Activated CD4-positive, alpha-beta T cell treated with anti-CD3 and anti-CD28 coated beads for 36 hours (primary cell): ENCODE measurements at regions of chr2 and their contacts with region 1.

Region 1: DNA sequence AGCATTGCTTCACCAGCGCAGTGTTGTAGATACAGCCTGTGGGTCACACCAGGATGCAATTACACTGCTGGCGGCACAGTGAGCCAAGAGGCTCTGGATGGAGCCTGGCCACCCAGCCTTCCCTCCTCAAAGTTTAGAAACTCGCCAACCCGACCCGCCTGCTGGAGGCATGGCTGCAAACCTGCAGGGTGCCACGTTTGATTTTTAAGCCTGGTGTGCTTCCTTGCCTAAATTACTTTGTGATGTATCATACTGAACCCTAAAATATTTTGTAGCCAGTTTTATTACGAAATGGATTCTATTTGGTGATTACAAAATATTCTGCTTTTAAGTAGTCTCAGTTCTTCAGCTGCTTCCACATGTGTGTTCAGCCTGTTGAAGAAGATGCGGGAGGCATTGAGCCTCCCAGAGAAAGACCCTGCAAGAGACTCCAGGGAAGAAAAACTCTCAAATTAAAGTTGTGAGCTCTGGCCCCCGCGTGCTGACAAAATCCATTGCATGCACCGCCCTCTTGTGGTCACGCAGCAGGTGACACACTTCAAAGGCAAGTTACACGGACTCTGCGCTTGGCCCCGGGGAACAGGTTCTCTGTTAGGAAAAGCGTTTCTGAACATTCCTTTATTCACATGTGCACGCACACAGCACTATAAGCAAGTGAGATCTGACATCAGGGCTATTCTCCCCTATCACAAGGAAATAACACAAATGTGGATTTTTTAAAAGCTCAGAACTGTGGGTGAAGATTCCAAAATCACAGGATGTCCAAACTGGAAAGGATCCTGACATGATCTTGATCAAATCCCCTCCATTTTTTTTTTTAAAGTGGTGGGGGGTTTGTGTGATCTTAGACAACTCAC is 63.0 kb upstream of the TWIST2 start:
- DNase-seq: peak; percentile 80
- ATAC-seq: peak; percentile 58
- H3K4me3 Mint-ChIP-seq: no peak overlapping the region
- H3K27ac Mint-ChIP-seq: no peak overlapping the region
- H3K4me1 Mint-ChIP-seq: peaks cover 2% of the 10 kb centered on the region
- H3K27me3 Mint-ChIP-seq: peaks cover 12% of the 10 kb centered on the region

Region 2: GRCh38 chr2:238362626-238363025 is 422.3 kb before region 1 on chr2:
- CTCF ChIA-PET with region 1: interaction called, 3 read pairs
- POLR2A ChIA-PET with region 1: no interaction called
- intact Hi-C with region 1: loop called in 1 of 2 experiments (anchors 5 kb)
- DNase-seq: no peak
- ATAC-seq: no peak
- H3K4me3 Mint-ChIP-seq: no peak overlapping the region
- H3K27ac Mint-ChIP-seq: no peak overlapping the region
- H3K4me1 Mint-ChIP-seq: no peaks in the 10 kb centered on the region
- H3K27me3 Mint-ChIP-seq: no peaks in the 10 kb centered on the region

Region 3: GRCh38 chr2:238513346-238513745 is 271.6 kb before region 1 on chr2:
- CTCF ChIA-PET with region 1: interaction called, 7 read pairs
- POLR2A ChIA-PET with region 1: no interaction called
- intact Hi-C with region 1: loop called (anchors 1 kb)
- DNase-seq: peak; percentile 72
- ATAC-seq: peak; percentile 42
- H3K4me3 Mint-ChIP-seq: no peak overlapping the region
- H3K27ac Mint-ChIP-seq: no peak overlapping the region
- H3K4me1 Mint-ChIP-seq: no peaks in the 10 kb centered on the region
- H3K27me3 Mint-ChIP-seq: no peaks in the 10 kb centered on the region

Region 4: GRCh38 chr2:238573065-238573778 is 211.7 kb before region 1 on chr2:
- CTCF ChIA-PET with region 1: interaction called, 5 read pairs
- POLR2A ChIA-PET with region 1: no interaction called
- intact Hi-C with region 1: loop called in 1 of 2 experiments (anchors 1 kb)
- DNase-seq: peak; percentile 57
- ATAC-seq: no peak
- H3K4me3 Mint-ChIP-seq: no peak overlapping the region
- H3K27ac Mint-ChIP-seq: no peak overlapping the region
- H3K4me1 Mint-ChIP-seq: no peaks in the 10 kb centered on the region
- H3K27me3 Mint-ChIP-seq: peaks cover 2% of the 10 kb centered on the region

Region 5: GRCh38 chr2:238720232-238720672 is 64.6 kb before region 1 on chr2:
- CTCF ChIA-PET with region 1: interaction called, 8 read pairs
- POLR2A ChIA-PET with region 1: no interaction called
- intact Hi-C with region 1: loop called (anchors 1 to 5 kb)
- DNase-seq: peak; percentile 80
- ATAC-seq: peak; percentile 71
- H3K4me3 Mint-ChIP-seq: no peak overlapping the region
- H3K27ac Mint-ChIP-seq: no peak overlapping the region
- H3K4me1 Mint-ChIP-seq: no peaks in the 10 kb centered on the region
- H3K27me3 Mint-ChIP-seq: peaks cover 26% of the 10 kb centered on the region